ENCODE measurements at regions of chr1 and their contacts with region 1.

Region 1: GRCh38 chr1:25037174-25038074 is 107.3 kb upstream of the RUNX3 start:
- DNase-seq: peak; percentile 77
- H3K4me3 Mint-ChIP-seq: no peak overlapping the region
- H3K27ac Mint-ChIP-seq: peak overlapping the region; percentile 64
- H3K4me1 Mint-ChIP-seq: peaks cover 51% of the 10 kb centered on the region
- H3K27me3 Mint-ChIP-seq: peaks cover 2% of the 10 kb centered on the region

Region 2: GRCh38 chr1:24683713-24684162 is 353.7 kb before region 1 on chr1:
- CTCF ChIA-PET with region 1: no interaction called
- POLR2A ChIA-PET with region 1: no interaction called
- DNase-seq: no peak
- H3K4me3 Mint-ChIP-seq: no peak overlapping the region
- H3K27ac Mint-ChIP-seq: no peak overlapping the region
- H3K4me1 Mint-ChIP-seq: peaks cover 2% of the 10 kb centered on the region
- H3K27me3 Mint-ChIP-seq: no peaks in the 10 kb centered on the region

Region 3: GRCh38 chr1:24955161-24955560 is 82.3 kb before region 1 on chr1:
- CTCF ChIA-PET with region 1: interaction called, 24 read pairs
- POLR2A ChIA-PET with region 1: interaction called, 3 read pairs
- DNase-seq: peak; percentile 79
- H3K4me3 Mint-ChIP-seq: peak overlapping the region; percentile 63
- H3K27ac Mint-ChIP-seq: peak overlapping the region; percentile 93
- H3K4me1 Mint-ChIP-seq: peaks cover 97% of the 10 kb centered on the region
- H3K27me3 Mint-ChIP-seq: no peaks in the 10 kb centered on the region

Region 4: DNA sequence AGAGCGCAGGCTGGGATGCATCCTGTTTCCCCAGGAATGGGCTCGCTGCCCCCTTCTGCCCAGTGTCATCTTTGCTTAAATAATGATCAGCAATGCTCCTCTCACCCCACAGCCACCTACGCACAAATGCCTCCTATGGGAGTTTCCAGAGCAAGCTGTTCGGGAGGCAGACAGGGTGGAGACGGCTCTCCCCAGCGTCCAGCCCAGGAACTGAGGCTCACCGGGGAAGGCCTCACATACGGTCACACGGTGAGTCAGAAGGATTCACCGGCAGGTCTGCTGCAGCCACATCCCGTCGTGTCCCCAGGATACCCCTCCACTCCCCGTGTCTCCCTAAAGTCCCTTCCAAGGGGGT is 67.0 kb before region 1 on chr1:
- CTCF ChIA-PET with region 1: interaction called, 27 read pairs
- POLR2A ChIA-PET with region 1: no interaction called
- DNase-seq: no peak
- H3K4me3 Mint-ChIP-seq: no peak overlapping the region
- H3K27ac Mint-ChIP-seq: no peak overlapping the region
- H3K4me1 Mint-ChIP-seq: peaks cover 76% of the 10 kb centered on the region
- H3K27me3 Mint-ChIP-seq: no peaks in the 10 kb centered on the region

Region 5: DNA sequence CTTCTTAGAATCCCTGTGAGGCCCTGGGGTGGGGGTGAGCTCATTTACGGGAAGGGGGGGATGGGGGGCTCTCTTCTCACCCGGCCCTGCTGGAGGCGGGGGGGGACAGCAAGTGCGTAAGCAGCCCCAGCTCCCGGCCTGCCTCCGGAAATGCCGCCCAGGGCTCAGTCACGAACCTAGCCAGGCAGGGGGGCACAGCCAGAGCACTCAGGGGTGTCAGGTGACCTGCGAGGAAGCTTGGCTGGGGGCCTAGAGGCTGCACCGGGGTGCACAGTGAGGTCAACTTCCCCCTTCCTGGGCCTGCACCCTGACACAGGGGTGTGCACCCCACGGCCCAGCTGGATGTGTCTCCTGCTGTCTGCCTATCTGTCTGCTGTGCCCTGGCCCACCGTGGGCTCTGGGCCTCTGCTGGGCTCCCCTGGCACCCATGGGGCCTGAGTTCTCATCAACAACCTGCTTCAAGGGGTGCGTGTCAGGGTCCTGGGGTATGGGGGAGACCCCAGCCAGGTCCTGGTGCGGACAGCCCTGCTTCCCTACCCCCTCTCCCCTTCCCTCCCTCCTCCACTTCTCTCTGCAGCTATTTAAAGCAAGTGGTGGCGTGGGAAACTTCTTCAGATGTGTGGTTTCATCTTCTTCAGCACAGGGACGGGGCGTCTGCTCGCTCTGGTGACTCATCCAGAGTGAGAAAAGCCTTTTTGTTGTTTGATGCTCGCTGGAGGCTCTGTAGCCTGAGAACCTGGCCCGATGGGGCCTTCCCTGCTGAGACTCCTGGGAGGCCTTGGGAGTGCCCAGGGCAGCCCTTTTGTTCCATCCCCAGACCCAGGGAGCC is 14.8 kb before region 1 on chr1:
- CTCF ChIA-PET with region 1: interaction called, 42 read pairs
- POLR2A ChIA-PET with region 1: no interaction called
- DNase-seq: peak; percentile 96
- H3K4me3 Mint-ChIP-seq: peak overlapping the region; percentile 69
- H3K27ac Mint-ChIP-seq: peak overlapping the region; percentile 98
- H3K4me1 Mint-ChIP-seq: peaks cover 96% of the 10 kb centered on the region
- H3K27me3 Mint-ChIP-seq: no peaks in the 10 kb centered on the region

Measured in activated CD4-positive, alpha-beta T cell treated with anti-CD3 and anti-CD28 coated beads, Interleukin-2, amount 10 ng/mL, durations not matched to agents 7 days and 5 days (primary cell).